ENCODE measurements at regions of chr3 and their contacts with region 1.

Region 1: GRCh38 chr3:45864760-45865519 is 21.4 kb upstream of the CCR9 start:
- DNase-seq: peak; percentile 41
- H3K4me3 Mint-ChIP-seq: peak overlapping the region; percentile 55
- H3K27ac Mint-ChIP-seq: peak overlapping the region; percentile 42
- H3K4me1 Mint-ChIP-seq: peaks cover 53% of the 10 kb centered on the region
- H3K27me3 Mint-ChIP-seq: peaks cover 31% of the 10 kb centered on the region

Region 2: DNA sequence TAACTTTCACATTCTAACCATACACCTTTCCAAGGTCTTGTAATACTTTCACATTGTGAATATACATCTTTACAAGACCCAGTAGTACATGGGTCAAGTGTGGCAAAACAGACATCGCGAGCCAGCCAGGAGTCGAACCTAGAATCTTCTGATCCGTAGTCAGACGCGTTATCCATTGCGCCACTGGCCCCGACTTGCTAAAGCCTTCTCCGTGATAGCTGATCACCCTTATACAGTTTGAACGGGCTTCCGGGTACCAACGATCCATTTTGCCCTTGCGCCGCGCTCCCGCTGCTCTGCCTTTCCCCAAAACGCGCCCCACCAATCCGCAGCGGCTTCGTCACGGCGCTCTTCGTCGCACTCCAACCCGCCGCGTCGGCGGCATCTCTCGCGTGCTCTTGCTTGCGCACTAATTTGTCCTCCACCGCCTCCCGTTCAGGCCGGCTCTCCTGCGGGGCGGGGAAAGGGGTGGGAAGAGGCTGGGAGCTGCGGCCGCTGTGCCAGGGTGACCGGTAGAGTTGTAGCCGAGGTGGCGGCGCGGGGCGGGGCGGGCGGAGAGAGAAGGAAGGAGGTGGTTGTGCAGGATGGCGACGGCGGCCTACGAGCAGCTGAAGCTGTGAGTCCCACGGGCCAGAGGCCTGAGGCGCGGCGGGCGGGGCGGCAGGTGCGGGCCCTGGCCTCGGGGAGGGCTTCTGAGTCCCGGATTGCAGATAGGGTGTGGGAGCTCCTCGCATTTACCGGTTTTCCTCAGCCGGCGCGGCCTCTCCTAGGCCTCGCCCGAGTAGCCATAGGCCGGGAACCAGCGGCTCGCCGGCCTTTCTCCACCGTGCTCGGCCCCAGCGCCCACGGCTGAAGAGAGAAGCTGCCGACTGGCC is 175.8 kb before region 1 on chr3 and contains the start of gene SACM1L:
- intact Hi-C with region 1: loop called (anchors 2 kb)
- DNase-seq: peak; percentile 96
- H3K4me3 Mint-ChIP-seq: peak within 1 kb of the TSS; percentile 95
- H3K27ac Mint-ChIP-seq: peak within 1 kb of the TSS; percentile 100
- H3K4me1 Mint-ChIP-seq: peaks cover 59% of the 10 kb centered on the region
- H3K27me3 Mint-ChIP-seq: peaks cover 4% of the 10 kb centered on the region
- total RNA-seq, gene SACM1L: 112 and 114 TPM in 2 replicates

Region 3: DNA sequence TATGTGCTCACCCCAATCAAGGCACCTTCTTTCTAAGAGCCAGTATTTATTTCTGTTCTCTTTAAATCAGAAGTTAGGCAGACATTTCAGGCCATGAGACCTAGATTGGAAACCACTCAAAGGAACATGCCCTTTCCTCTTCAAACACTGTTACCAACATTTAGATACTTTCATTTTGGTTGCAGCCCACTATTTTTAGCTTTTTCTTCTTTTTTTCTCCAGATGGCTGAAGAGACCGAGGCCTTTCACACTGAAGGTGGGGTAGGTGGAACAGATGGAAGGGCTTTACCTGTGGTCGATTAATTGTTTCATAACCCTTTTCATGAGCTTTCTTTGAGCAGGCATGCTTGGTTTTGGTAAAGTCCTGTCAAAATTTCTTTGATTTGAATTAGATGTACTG is 12.1 kb before region 1 on chr3:
- intact Hi-C with region 1: no loop called
- DNase-seq: no peak
- H3K4me3 Mint-ChIP-seq: no peak overlapping the region
- H3K27ac Mint-ChIP-seq: no peak overlapping the region
- H3K4me1 Mint-ChIP-seq: peaks cover 15% of the 10 kb centered on the region
- H3K27me3 Mint-ChIP-seq: peaks cover 68% of the 10 kb centered on the region

Region 4: GRCh38 chr3:45881078-45882022 is 16.4 kb after region 1 on chr3:
- intact Hi-C with region 1: loop called (anchors 1 kb)
- DNase-seq: no peak
- H3K4me3 Mint-ChIP-seq: no peak overlapping the region
- H3K27ac Mint-ChIP-seq: peak overlapping the region; percentile 3
- H3K4me1 Mint-ChIP-seq: peaks cover 24% of the 10 kb centered on the region
- H3K27me3 Mint-ChIP-seq: peaks cover 42% of the 10 kb centered on the region

Region 5: GRCh38 chr3:45962033-45962432 is 97.1 kb after region 1 on chr3:
- intact Hi-C with region 1: loop called (anchors 1 kb)
- DNase-seq: peak; percentile 48
- H3K4me3 Mint-ChIP-seq: peak overlapping the region; percentile 54
- H3K27ac Mint-ChIP-seq: peak overlapping the region; percentile 73
- H3K4me1 Mint-ChIP-seq: peaks cover 88% of the 10 kb centered on the region
- H3K27me3 Mint-ChIP-seq: no peaks in the 10 kb centered on the region

Region 6: GRCh38 chr3:45972534-45973402 is 107.8 kb after region 1 on chr3:
- intact Hi-C with region 1: no loop called
- DNase-seq: no peak
- H3K4me3 Mint-ChIP-seq: peak overlapping the region; percentile 32
- H3K27ac Mint-ChIP-seq: peak overlapping the region; percentile 72
- H3K4me1 Mint-ChIP-seq: peaks cover 98% of the 10 kb centered on the region
- H3K27me3 Mint-ChIP-seq: no peaks in the 10 kb centered on the region

Region 7: GRCh38 chr3:46049116-46049515 is 184.2 kb after region 1 on chr3:
- intact Hi-C with region 1: no loop called
- DNase-seq: no peak
- H3K4me3 Mint-ChIP-seq: no peak overlapping the region
- H3K27ac Mint-ChIP-seq: no peak overlapping the region
- H3K4me1 Mint-ChIP-seq: peaks cover 45% of the 10 kb centered on the region
- H3K27me3 Mint-ChIP-seq: peaks cover 18% of the 10 kb centered on the region

Region 8: DNA sequence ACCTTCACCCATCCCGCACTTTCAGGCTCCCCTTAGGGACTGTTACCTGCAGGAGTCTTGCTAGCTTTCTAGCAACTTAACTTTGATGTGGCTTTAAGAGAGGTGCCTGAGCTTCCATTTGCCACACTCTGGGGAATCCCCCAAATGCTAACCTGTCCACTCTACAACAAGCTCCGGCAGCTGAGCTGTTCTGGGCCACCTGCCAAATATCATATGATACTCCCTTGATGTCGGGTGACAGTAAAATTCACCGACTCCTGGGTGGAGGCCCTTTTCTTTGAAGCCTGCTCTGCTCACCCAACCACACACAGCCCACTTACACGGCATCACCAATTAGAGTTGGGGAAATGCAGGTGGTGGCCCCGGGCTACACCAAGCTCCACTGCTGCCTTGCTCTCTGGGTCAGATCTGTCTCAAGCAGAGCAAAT is 200.4 kb after region 1 on chr3:
- intact Hi-C with region 1: loop called (anchors 1 kb)
- DNase-seq: peak; percentile 64
- H3K4me3 Mint-ChIP-seq: peak overlapping the region; percentile 63
- H3K27ac Mint-ChIP-seq: peak overlapping the region; percentile 59
- H3K4me1 Mint-ChIP-seq: peaks cover 54% of the 10 kb centered on the region
- H3K27me3 Mint-ChIP-seq: peaks cover 41% of the 10 kb centered on the region

Region 9: DNA sequence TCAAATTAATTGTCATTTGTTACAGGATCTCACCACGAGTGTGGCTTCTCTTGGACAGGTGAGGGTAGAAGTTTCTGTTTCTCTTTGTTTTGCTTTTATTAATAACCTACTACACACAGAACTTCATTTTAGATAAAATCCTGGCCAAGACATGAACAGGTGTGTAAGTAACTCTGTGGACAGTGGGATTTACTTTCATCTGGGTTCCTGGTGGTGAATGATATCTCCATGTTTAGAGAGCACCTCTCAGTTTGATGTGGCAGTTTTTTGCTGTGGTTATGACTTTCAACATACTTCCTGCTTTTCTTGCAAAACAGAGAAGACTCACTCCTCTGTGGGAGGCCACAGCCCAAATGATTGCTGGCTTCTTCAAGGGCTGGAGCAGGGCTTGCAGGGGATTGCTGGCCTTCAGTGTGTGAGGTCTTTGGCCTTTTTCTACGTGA is 233.4 kb after region 1 on chr3:
- intact Hi-C with region 1: loop called (anchors 5 kb)
- DNase-seq: peak; percentile 70
- H3K4me3 Mint-ChIP-seq: peak overlapping the region; percentile 71
- H3K27ac Mint-ChIP-seq: peak overlapping the region; percentile 95
- H3K4me1 Mint-ChIP-seq: peaks cover 75% of the 10 kb centered on the region
- H3K27me3 Mint-ChIP-seq: peaks cover 5% of the 10 kb centered on the region

Measured in activated T-helper 1 cell treated with anti-CD3 and anti-CD28 coated beads, Interleukin-12 subunit alpha, Interleukin-12 subunit beta, Interleukin-2, Interleukin-4 antibody, amounts not matched to agents 30 ng/mL and 10 ng/mL and 1 ng/mL, durations not matched to agents 14 hours and 24 hours and 36 hours (primary cell).